ENCODE measurements at regions of chr14 and their contacts with region 1.

Region 1: DNA sequence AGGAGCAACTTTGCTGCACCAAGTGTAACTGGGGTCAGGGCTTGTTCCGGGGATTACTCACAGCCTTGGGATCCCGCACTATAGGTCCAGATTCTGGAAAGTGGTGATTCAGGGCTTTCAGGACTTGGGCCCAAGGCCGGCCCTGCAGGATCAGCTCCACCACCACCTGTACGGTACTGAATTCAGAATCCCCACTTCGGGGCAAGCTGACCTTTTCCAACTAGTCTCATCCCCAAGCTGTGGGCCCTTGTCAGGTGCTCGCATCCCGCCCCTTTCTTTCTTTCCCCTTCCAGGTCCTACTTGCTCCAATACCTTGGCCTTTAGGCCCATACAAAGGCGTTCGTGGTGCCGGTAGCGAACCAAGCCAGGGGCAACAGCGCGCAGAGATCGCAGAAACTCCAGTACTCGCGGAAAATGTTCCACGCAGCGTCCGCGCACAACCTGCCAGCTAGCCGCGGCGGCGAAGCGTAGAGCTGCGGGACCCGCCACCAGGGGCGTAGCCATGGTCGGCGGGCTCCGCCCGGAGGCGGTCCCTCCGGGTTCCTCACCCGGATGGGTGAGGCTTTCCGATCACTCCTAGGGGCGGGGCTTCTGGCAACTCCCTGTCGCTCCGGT is 487 bp downstream of the TINF2 start:
- DNase-seq: peak; percentile 84 to 97 (median 94)
- ATAC-seq: peak; percentile 83
- H3K4me3 ChIP-seq: peak overlapping the region; percentile 75 to 83
- H3K4me3 Mint-ChIP-seq: peak overlapping the region; percentile 99
- H3K27ac ChIP-seq: peak overlapping the region; percentile 98
- H3K27ac Mint-ChIP-seq: peak overlapping the region; percentile 100
- H3K4me1 ChIP-seq: peaks cover 41% of the 10 kb centered on the region
- H3K4me1 Mint-ChIP-seq: peaks cover 58% of the 10 kb centered on the region
- H3K27me3 ChIP-seq: no peaks in the 10 kb centered on the region
- H3K27me3 Mint-ChIP-seq: no peaks in the 10 kb centered on the region
- CTCF ChIP-seq: peak; percentile 48

Region 2: GRCh38 chr14:22994762-22995275 is 1247.1 kb before region 1 on chr14:
- CTCF ChIA-PET with region 1: no interaction called
- POLR2A ChIA-PET with region 1: no interaction called
- intact Hi-C with region 1: no loop called
- DNase-seq: peak in 7 of 9 experiments; percentile 13 to 63 (median 46)
- ATAC-seq: peak; percentile 85
- H3K4me3 ChIP-seq: no peak overlapping the region
- H3K4me3 Mint-ChIP-seq: no peak overlapping the region
- H3K27ac ChIP-seq: no peak overlapping the region
- H3K27ac Mint-ChIP-seq: no peak overlapping the region
- H3K4me1 ChIP-seq: peaks cover 3% of the 10 kb centered on the region
- H3K4me1 Mint-ChIP-seq: peaks cover 5% of the 10 kb centered on the region
- H3K27me3 ChIP-seq: no peaks in the 10 kb centered on the region
- H3K27me3 Mint-ChIP-seq: no peaks in the 10 kb centered on the region
- CTCF ChIP-seq: peak; percentile 46

Region 3: GRCh38 chr14:24146978-24147760 is 94.8 kb before region 1 on chr14 and contains the start of gene RNF31:
- CTCF ChIA-PET with region 1: interaction called, 5 read pairs
- POLR2A ChIA-PET with region 1: no interaction called
- intact Hi-C with region 1: loop called in 1 of 2 experiments (anchors 1 kb)
- DNase-seq: peak; percentile 93 to 99 (median 97)
- ATAC-seq: peak; percentile 89
- H3K4me3 ChIP-seq: peak within 1 kb of the TSS; percentile 96 to 99
- H3K4me3 Mint-ChIP-seq: peak within 1 kb of the TSS; percentile 95
- H3K27ac ChIP-seq: peak within 1 kb of the TSS; percentile 79 to 91
- H3K27ac Mint-ChIP-seq: peak within 1 kb of the TSS; percentile 93
- H3K4me1 ChIP-seq: peaks cover 34% of the 10 kb centered on the region
- H3K4me1 Mint-ChIP-seq: peaks cover 53% of the 10 kb centered on the region
- H3K27me3 ChIP-seq: no peaks in the 10 kb centered on the region
- H3K27me3 Mint-ChIP-seq: no peaks in the 10 kb centered on the region
- CTCF ChIP-seq: no peak
- total RNA-seq, gene RNF31: 45.4 to 51.7 TPM

Region 4: GRCh38 chr14:24195191-24196070 is 46.5 kb before region 1 on chr14 and contains the start of gene TM9SF1:
- CTCF ChIA-PET with region 1: interaction called, 8 read pairs
- POLR2A ChIA-PET with region 1: interaction called, 11 read pairs
- intact Hi-C with region 1: loop called (anchors 1 to 2 kb)
- DNase-seq: peak; percentile 81 to 96 (median 91)
- ATAC-seq: peak; percentile 83
- H3K4me3 ChIP-seq: peak within 1 kb of the TSS; percentile 87 to 94
- H3K4me3 Mint-ChIP-seq: peak within 1 kb of the TSS; percentile 94
- H3K27ac ChIP-seq: peak within 1 kb of the TSS; percentile 99 to 100
- H3K27ac Mint-ChIP-seq: peak within 1 kb of the TSS; percentile 98
- H3K4me1 ChIP-seq: peaks cover 31% of the 10 kb centered on the region
- H3K4me1 Mint-ChIP-seq: peaks cover 50% of the 10 kb centered on the region
- H3K27me3 ChIP-seq: no peaks in the 10 kb centered on the region
- H3K27me3 Mint-ChIP-seq: no peaks in the 10 kb centered on the region
- CTCF ChIP-seq: no peak
- total RNA-seq, gene TM9SF1: 17.5 to 20.4 TPM

Region 5: GRCh38 chr14:24271134-24271833 is 29.3 kb after region 1 on chr14 and contains the start of gene RABGGTA:
- CTCF ChIA-PET with region 1: interaction called, 36 read pairs
- POLR2A ChIA-PET with region 1: interaction called, 53 read pairs
- intact Hi-C with region 1: loop called (anchors 1 kb)
- DNase-seq: peak; percentile 85 to 99 (median 91)
- ATAC-seq: peak; percentile 84
- H3K4me3 ChIP-seq: peak within 1 kb of the TSS; percentile 81 to 90
- H3K4me3 Mint-ChIP-seq: peak within 1 kb of the TSS; percentile 91
- H3K27ac ChIP-seq: peak within 1 kb of the TSS; percentile 93 to 97
- H3K27ac Mint-ChIP-seq: peak within 1 kb of the TSS; percentile 98
- H3K4me1 ChIP-seq: peaks cover 31% of the 10 kb centered on the region
- H3K4me1 Mint-ChIP-seq: peaks cover 36% of the 10 kb centered on the region
- H3K27me3 ChIP-seq: no peaks in the 10 kb centered on the region
- H3K27me3 Mint-ChIP-seq: no peaks in the 10 kb centered on the region
- CTCF ChIP-seq: peak; percentile 50
- total RNA-seq, gene RABGGTA: 59.1 to 65.9 TPM

Region 6: GRCh38 chr14:24299255-24300195 is 57.6 kb after region 1 on chr14 and contains the starts of genes DHRS1 and NOP9:
- CTCF ChIA-PET with region 1: interaction called, 191 read pairs
- POLR2A ChIA-PET with region 1: interaction called, 44 read pairs
- intact Hi-C with region 1: loop called (anchors 1 kb)
- DNase-seq: peak; percentile 82 to 98 (median 92)
- ATAC-seq: peak; percentile 78
- H3K4me3 ChIP-seq: peak within 1 kb of the TSS; percentile 80 to 83
- H3K4me3 Mint-ChIP-seq: peak within 1 kb of the TSS; percentile 94
- H3K27ac ChIP-seq: peak within 1 kb of the TSS; percentile 80 to 85
- H3K27ac Mint-ChIP-seq: peak within 1 kb of the TSS; percentile 96
- H3K4me1 ChIP-seq: peaks cover 28% of the 10 kb centered on the region
- H3K4me1 Mint-ChIP-seq: peaks cover 51% of the 10 kb centered on the region
- H3K27me3 ChIP-seq: no peaks in the 10 kb centered on the region
- H3K27me3 Mint-ChIP-seq: no peaks in the 10 kb centered on the region
- CTCF ChIP-seq: no peak
- total RNA-seq, gene DHRS1: 24.3 to 28.5 TPM
- total RNA-seq, gene NOP9: 35.6 to 35.8 TPM

Region 7: GRCh38 chr14:24431569-24432258 is 189.8 kb after region 1 on chr14:
- CTCF ChIA-PET with region 1: interaction called, 46 read pairs
- POLR2A ChIA-PET with region 1: interaction called, 20 read pairs
- intact Hi-C with region 1: loop called (anchors 1 to 2 kb)
- DNase-seq: peak; percentile 77 to 94 (median 90)
- ATAC-seq: peak; percentile 52
- H3K4me3 ChIP-seq: peak overlapping the region in 1 of 2 experiments; percentile 71
- H3K4me3 Mint-ChIP-seq: peak overlapping the region; percentile 93
- H3K27ac ChIP-seq: peak overlapping the region; percentile 31 to 90
- H3K27ac Mint-ChIP-seq: peak overlapping the region; percentile 98
- H3K4me1 ChIP-seq: peaks cover 47% of the 10 kb centered on the region
- H3K4me1 Mint-ChIP-seq: peaks cover 45% of the 10 kb centered on the region
- H3K27me3 ChIP-seq: no peaks in the 10 kb centered on the region
- H3K27me3 Mint-ChIP-seq: no peaks in the 10 kb centered on the region
- CTCF ChIP-seq: peak; percentile 83

Region 8: DNA sequence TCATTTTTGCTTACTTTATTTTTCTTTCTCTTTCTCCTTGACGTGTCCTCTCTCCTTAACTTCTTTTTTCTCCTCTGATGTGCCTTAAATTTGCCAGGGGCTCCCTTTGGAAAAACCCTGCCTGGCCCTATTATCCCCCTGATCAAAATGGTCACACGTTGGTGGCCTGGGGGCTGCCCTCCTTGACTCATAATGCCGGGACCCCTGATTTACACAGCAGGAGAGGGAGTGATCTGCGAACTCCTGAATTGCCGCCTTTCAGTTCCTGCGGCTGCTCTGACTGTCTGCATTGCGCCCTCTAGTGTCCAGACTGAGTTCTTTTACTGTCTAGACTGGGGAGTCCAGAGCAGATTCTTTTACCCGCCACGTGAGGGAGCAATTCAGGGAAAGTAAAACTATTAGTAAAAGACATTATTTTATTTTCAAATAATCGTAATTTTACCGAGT is 436.9 kb after region 1 on chr14:
- CTCF ChIA-PET with region 1: no interaction called
- POLR2A ChIA-PET with region 1: no interaction called
- intact Hi-C with region 1: loop called in 1 of 2 experiments (anchors 1 kb)
- DNase-seq: peak; percentile 49 to 94 (median 78)
- ATAC-seq: peak; percentile 82
- H3K4me3 ChIP-seq: peak overlapping the region; percentile 34 to 57
- H3K4me3 Mint-ChIP-seq: peak overlapping the region; percentile 84
- H3K27ac ChIP-seq: peak overlapping the region in 1 of 2 experiments; percentile 78
- H3K27ac Mint-ChIP-seq: peak overlapping the region; percentile 78
- H3K4me1 ChIP-seq: peaks cover 22% of the 10 kb centered on the region
- H3K4me1 Mint-ChIP-seq: peaks cover 60% of the 10 kb centered on the region
- H3K27me3 ChIP-seq: no peaks in the 10 kb centered on the region
- H3K27me3 Mint-ChIP-seq: no peaks in the 10 kb centered on the region
- CTCF ChIP-seq: peak; percentile 99